Activated CD4-positive, alpha-beta memory T cell treated with anti-CD3 and anti-CD28 coated beads for 36 hours (primary cell): ENCODE measurements at regions of chr12 and their contacts with region 1.

Region 1: DNA sequence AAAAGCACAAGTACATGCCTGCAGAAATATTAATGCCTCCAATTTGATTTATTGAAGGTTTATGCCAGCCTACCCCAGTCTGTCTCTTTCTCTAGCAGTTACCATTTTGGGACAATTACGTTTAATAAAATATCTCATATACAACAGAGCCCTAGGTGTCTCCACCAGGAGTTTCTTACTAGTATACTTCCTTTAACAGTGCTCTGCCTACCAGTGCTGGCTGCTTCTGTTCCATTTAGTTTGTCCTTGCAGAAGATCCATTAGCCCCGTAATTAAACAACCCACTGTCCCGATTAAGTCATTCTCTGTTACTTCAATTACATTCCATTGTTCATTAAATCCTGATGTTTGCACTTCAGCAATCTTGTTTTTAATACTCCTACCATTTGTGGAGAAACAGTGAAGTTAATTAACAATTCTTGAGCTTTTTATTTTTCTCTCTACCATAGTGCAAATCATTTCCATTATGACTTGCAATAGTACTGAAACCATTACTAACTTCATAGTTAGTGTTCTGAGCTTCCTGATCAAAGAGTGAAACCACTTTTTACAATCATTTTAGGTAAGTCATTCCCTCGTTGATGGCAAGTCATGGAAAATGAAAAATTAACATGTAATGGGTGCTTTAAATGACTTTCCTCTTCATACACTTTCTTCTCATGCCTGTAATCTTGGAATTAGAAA is 121.1 kb downstream of the PLXNC1 start:
- DNase-seq: no peak
- H3K4me3 Mint-ChIP-seq: no peak overlapping the region
- H3K27ac Mint-ChIP-seq: no peak overlapping the region
- H3K4me1 Mint-ChIP-seq: peaks cover 49% of the 10 kb centered on the region
- H3K27me3 Mint-ChIP-seq: no peaks in the 10 kb centered on the region

Region 2: GRCh38 chr12:94282675-94283074 is 13.2 kb after region 1 on chr12:
- CTCF ChIA-PET with region 1: no interaction called
- POLR2A ChIA-PET with region 1: interaction called, 5 read pairs
- intact Hi-C with region 1: loop called (anchors 1 kb)
- DNase-seq: peak; percentile 68
- H3K4me3 Mint-ChIP-seq: peak overlapping the region; percentile 25
- H3K27ac Mint-ChIP-seq: peak overlapping the region; percentile 59
- H3K4me1 Mint-ChIP-seq: peaks cover 26% of the 10 kb centered on the region
- H3K27me3 Mint-ChIP-seq: no peaks in the 10 kb centered on the region

Region 3: GRCh38 chr12:94336211-94336925 is 66.9 kb after region 1 on chr12:
- CTCF ChIA-PET with region 1: no interaction called
- POLR2A ChIA-PET with region 1: no interaction called
- intact Hi-C with region 1: no loop called
- DNase-seq: no peak
- H3K4me3 Mint-ChIP-seq: no peak overlapping the region
- H3K27ac Mint-ChIP-seq: no peak overlapping the region
- H3K4me1 Mint-ChIP-seq: no peaks in the 10 kb centered on the region
- H3K27me3 Mint-ChIP-seq: no peaks in the 10 kb centered on the region

Region 4: DNA sequence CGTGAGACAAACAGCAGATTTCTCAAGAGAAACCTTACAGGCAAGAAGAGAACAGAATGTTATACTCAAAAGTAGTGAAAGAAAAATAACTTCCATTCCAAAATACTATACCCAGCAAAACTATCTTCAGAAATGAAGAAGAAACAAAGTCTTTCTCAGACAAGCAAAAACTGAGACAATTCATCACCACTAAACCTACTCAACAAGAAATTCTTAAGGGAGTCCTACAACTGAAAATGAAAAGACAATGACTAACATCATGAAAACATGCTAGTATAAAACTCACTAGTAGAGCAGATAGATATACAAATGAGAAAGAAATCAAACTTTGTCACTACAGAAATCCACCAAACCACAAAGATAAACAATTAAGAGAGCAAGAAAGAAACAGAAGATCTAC is 83.7 kb after region 1 on chr12:
- CTCF ChIA-PET with region 1: no interaction called
- POLR2A ChIA-PET with region 1: no interaction called
- intact Hi-C with region 1: no loop called
- DNase-seq: no peak
- H3K4me3 Mint-ChIP-seq: no peak overlapping the region
- H3K27ac Mint-ChIP-seq: no peak overlapping the region
- H3K4me1 Mint-ChIP-seq: peaks cover 6% of the 10 kb centered on the region
- H3K27me3 Mint-ChIP-seq: no peaks in the 10 kb centered on the region

Region 5: DNA sequence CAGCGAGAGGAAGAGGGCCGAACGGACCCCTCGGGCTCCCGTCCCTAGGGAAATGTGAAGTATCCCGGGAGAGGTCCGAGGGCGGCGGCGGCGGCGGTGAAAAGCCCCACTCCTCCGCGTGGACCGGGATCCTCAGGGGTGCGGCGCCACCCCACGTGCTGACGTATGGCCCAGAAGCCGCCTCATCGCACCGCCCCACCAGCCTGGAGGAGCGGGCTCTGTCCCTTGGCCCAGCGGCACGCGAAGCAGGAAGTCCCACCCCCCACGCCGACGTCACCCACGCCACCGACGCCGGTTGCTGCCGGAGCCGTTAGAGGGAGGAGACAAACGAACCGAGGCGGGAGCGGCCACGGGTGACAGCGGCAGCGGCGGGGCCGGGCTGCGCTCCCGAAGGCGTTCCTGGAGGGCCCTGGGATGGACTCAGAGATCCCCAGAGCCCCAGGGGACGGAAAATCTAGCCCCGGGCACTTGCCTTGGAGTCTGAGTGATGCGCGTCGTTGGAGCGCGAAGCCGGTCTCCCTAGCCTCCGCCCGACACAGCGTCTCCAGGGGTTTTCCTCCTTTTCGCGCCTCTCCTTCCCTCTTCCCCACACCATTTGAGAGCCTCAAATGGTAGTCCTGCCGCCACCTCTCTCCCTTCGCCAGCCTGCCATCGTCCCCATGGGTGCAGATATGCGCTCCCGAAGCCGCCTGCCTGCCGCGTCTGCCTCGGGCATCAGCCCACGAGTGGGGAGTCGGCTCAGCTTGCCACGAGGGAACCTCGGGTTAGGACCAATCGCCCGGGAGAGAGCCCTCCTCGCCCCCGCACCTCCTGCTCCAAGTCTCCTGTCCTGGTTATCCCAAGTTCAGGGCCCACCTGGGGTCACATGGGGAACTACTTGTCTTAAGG is 190.5 kb after region 1 on chr12 and contains the start of gene CEP83:
- CTCF ChIA-PET with region 1: no interaction called
- POLR2A ChIA-PET with region 1: no interaction called
- intact Hi-C with region 1: loop called (anchors 2 kb)
- DNase-seq: peak; percentile 98
- H3K4me3 Mint-ChIP-seq: peak within 1 kb of the TSS; percentile 82
- H3K27ac Mint-ChIP-seq: peak within 1 kb of the TSS; percentile 92
- H3K4me1 Mint-ChIP-seq: peaks cover 31% of the 10 kb centered on the region
- H3K27me3 Mint-ChIP-seq: peaks cover 7% of the 10 kb centered on the region
- total RNA-seq, gene CEP83: 23.4 TPM